Left cardiac atrium (tissue), 4 donors: ENCODE measurements at regions of chr17 and their contacts with region 1.

Region 1: GRCh38 chr17:42322382-42323267 is 34.3 kb downstream of the STAT5A start:
- DNase-seq: peak; percentile 92
- ATAC-seq: peak; percentile 78 to 88

Region 2: DNA sequence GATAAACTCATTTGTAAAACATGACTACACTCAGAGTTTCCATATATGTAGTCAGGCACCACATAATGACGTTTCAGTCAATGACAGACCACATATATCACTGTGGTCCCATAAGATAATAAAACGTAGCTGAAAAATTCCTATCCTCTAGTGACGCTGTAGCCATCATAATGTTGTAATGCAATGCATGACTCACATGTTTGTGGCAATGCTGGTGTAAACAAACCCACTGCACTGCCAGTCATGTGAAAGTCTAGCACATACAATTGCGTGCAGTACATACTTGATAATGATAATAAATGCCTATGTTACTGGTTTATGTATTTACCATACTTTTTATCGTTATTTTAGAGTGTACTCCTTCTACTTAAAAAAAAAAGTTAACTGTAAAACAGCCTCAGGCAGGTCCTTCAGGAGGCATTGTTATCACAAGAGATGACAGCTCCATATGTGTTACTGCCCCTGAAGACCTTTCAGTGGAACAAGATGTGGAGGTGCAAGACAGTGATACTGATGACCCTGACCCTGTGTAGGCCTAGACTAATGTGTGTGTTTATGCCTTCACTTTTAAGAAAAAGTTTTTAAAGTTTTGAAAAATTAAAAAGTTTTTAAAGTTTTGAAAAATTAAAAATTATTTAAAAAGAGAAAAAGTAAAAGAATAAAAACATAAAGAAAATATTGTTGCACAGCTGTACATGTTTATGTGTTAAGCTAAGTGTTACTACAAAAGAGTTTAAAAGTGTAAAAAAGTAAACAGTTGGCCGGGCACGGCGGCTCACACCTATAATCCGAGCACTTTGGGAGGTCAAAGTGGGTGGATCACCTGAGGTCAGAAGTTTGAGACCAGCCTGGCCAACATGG is 55.5 kb before region 1 on chr17:
- intact Hi-C with region 1: no loop called
- DNase-seq: no peak
- ATAC-seq: peak in 1 of 2 donors; percentile 41

Region 3: DNA sequence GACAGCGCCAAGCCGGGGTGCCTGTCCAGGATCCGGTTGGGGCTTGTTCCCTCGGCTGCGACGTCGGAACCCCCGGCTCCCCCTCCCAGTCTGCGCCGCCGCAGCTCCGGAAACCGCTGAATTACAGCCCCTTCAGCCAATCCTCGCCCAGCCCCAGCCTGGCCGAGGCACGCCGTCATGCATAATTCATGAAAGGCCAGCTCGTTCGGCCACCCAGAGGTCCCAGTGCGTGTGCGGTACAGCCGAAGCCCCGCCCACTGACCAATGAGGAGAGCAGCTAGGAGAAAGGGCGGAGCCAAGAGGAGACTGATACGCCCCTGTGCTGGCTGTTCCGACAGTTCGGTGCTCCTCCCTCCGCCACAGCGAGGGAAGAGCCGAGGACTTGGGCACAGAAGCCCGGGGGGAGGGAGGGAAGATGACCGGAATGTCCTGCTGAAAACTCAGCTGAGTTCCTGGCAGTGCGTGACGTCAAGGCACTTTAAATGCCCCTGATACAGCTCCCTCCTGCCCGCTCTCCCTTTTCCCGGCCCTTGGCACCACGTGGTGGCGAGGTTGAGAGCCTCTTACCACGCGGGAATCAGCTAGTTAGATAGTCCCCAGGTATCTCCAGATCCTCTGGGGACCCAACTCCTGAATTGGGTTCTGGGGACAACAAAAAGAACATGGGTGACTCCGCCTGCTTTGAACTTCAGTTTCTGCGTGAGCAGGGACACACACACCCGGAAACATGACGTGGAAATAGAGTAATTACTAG is 65.9 kb after region 1 on chr17 and contains the start of gene STAT3:
- intact Hi-C with region 1: no loop called
- DNase-seq: peak; percentile 100
- ATAC-seq: peak; percentile 97 to 98
- total RNA-seq, gene STAT3: 106 to 241 TPM

Region 4: DNA sequence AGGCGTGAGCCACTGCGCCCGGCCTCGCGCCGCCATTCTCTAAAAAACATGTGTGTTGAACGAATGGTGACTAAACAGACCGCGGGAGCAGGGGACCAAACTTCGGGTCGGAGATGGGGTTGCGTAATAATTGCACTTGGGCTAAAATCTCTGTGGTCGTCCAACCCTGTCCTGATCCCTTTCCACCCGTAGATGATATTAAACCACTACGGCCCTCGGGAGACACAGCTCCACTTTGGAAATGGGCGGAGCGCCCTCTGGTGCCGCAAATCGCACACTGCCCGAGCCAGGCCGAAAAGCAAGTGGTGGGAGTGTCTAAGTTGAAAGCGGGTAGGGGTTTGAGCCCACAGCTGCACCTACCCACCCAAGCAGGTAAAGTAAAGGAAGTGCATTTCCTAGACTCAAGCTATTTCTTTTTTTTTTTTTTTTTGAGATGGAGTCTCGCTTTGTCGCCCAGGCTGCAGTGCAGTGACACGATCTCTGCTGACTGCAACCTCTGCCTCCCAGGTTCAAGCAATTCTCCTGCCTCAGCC is 83.4 kb after region 1 on chr17:
- intact Hi-C with region 1: loop called (anchors 1 to 2 kb)
- DNase-seq: peak; percentile 88
- ATAC-seq: peak; percentile 49 to 68

Region 5: GRCh38 chr17:42441371-42442195 is 119.0 kb after region 1 on chr17:
- intact Hi-C with region 1: no loop called
- DNase-seq: no peak
- ATAC-seq: no peak

Region 6: GRCh38 chr17:42527273-42527703 is 204.7 kb after region 1 on chr17:
- intact Hi-C with region 1: loop called in 1 of 2 experiments (anchors 5 kb)
- DNase-seq: peak; percentile 79
- ATAC-seq: peak; percentile 82 to 83